ENCODE measurements at regions of chr5 and their contacts with region 1.

Region 1: DNA sequence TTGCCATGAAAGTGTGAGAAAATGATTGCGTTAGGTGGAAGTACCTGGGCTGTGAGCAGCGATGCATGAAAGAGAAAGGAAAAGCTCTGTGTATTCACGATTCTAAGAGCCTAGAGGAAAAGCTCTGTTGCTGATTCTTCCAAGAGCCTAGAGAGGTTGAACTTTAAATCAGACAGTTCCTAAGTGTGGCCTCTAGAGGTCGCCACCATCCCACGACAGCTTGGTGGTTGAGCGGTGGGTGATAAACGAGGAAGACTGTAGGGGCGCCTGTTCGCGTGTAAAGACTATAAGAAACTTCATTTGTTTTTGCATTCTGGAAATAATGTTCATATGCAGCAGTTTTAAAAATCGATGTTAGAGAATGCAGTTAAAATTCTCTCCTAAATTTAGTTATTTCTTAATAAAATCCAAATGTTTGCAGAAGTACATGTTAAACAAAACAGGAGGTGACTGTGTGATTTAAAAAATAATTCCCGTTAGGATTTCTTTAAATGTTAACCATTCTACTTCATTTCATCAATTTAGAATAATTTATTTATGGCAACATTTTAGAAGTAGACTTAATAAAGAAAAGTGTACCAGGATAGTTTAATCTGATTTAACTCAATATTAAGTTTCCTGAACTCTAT is 107.7 kb downstream of the TENT4A start:
- DNase-seq: peak; percentile 68
- CTCF ChIP-seq: peak; percentile 69

Region 2: DNA sequence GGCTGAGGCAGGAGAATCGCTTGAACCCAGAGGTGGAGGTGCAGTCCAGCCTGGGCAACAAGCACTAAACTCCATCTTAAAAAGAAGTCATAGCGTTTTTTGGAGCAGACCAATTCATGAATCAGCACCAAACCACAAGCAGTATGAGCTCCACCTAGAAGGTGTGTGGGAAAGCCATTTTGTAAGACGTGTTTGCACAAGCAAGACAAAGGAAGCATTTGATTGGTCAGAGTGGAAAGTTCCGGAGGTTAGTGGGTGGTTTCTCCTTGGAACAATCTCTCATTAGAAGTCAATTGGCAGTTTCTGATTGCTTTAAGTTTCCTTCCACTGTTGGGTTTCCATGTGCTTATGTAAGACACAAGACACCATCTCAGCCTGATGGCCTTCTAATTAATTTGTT is 182.7 kb before region 1 on chr5:
- in situ Hi-C with region 1: no loop called
- DNase-seq: no peak
- CTCF ChIP-seq: no peak

Region 3: GRCh38 chr5:7372399-7372798 is 551.4 kb after region 1 on chr5:
- in situ Hi-C with region 1: no loop called
- DNase-seq: no peak
- CTCF ChIP-seq: no peak

Region 4: DNA sequence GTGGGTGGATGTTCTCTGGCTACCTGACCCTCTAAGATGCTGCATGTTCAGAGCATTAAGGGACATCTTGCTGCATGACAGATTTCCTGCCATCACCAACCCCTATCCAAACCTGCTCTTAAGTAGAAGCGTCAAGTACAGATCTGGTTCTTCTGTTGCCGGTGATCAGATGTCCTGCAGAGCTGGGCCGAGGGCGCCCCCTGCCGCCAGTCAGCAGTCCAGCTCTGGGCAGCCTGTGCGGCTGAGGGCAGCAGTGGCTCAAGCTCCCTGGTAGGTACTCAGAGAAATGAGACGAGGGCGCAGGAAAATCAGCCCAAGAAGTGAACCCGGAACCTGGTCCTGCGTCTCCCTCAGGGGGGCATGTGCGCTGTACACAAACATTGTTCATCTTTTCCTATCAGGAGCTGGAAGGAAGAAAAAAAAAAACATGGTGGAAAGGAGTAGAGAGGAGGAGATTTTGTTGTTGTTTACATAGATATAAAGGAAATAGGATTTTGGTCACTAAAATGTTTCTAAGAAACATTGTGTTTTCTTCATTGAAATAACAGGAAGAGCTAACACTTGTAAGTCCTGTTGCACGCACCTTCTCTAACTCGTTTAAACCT is 934.1 kb after region 1 on chr5:
- in situ Hi-C with region 1: loop called (anchors 25 kb)
- DNase-seq: peak; percentile 64
- CTCF ChIP-seq: peak; percentile 93